ENCODE measurements at regions of chr9 and their contacts with region 1.

Region 1: GRCh38 chr9:128191406-128192046 is at the start of gene CIZ1:
- DNase-seq: peak; percentile 71
- H3K4me3 Mint-ChIP-seq: peak within 1 kb of the TSS; percentile 96
- H3K27ac Mint-ChIP-seq: peak within 1 kb of the TSS; percentile 83
- H3K4me1 Mint-ChIP-seq: peaks cover 21% of the 10 kb centered on the region
- H3K27me3 Mint-ChIP-seq: no peaks in the 10 kb centered on the region
- total RNA-seq, gene CIZ1: 79.5 to 82.8 TPM

Region 2: DNA sequence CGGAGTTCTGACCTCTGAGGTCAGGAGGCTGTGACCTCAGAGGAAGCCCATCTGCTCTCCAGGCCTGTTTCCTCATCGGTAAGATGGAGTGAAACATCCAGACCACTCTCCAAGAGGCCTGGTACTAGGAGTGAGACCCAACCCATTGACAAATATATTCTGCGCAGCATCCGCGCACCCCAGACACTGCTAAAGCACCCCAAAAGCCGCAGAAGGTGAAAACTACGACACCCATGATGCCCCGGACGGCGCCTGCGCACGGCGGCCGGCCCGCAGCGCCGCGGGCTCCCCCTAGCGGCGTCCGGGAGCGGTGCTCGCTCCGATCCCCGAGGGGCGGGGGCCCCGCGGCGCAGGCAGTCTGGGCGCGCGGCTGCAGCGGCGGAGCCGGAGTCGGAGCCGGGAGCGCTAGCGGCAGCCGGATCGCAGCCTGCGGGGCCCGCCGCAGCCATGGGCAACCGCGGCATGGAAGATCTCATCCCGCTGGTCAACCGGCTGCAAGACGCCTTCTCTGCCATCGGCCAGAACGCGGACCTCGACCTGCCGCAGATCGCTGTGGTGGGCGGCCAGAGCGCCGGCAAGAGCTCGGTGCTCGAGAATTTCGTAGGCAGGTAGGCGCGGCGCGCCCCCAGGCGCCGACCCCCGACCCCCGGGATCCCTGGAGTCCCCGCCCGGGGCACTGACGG is 11.6 kb after region 1 on chr9 and contains the start of gene DNM1:
- CTCF ChIA-PET with region 1: interaction called, 6 read pairs
- intact Hi-C with region 1: loop called (anchors 1 kb)
- DNase-seq: peak; percentile 61
- H3K4me3 Mint-ChIP-seq: peak within 1 kb of the TSS; percentile 69
- H3K27ac Mint-ChIP-seq: no peak within 1 kb of the TSS
- H3K4me1 Mint-ChIP-seq: peaks cover 12% of the 10 kb centered on the region
- H3K27me3 Mint-ChIP-seq: peaks cover 8% of the 10 kb centered on the region
- total RNA-seq, gene DNM1: 0.07 to 0.77 TPM

Region 3: GRCh38 chr9:128218518-128219389 is 27.2 kb after region 1 on chr9:
- CTCF ChIA-PET with region 1: interaction called, 7 read pairs
- intact Hi-C with region 1: loop called (anchors 2 kb)
- DNase-seq: peak; percentile 99
- H3K4me3 Mint-ChIP-seq: peak overlapping the region; percentile 77
- H3K27ac Mint-ChIP-seq: no peak overlapping the region
- H3K4me1 Mint-ChIP-seq: peaks cover 13% of the 10 kb centered on the region
- H3K27me3 Mint-ChIP-seq: no peaks in the 10 kb centered on the region

Region 4: GRCh38 chr9:128747234-128747633 is 555.7 kb after region 1 on chr9:
- CTCF ChIA-PET with region 1: no interaction called
- intact Hi-C with region 1: no loop called
- DNase-seq: no peak
- H3K4me3 Mint-ChIP-seq: no peak overlapping the region
- H3K27ac Mint-ChIP-seq: no peak overlapping the region
- H3K4me1 Mint-ChIP-seq: no peaks in the 10 kb centered on the region
- H3K27me3 Mint-ChIP-seq: no peaks in the 10 kb centered on the region